Left ventricle myocardium inferior (tissue), 1 donor: ENCODE measurements at regions of chr11 and their contacts with region 1.

Region 1: GRCh38 chr11:123110356-123110755 is 48.4 kb upstream of the HSPA8 start:
- DNase-seq: no peak
- H3K4me3 ChIP-seq: no peak overlapping the region
- H3K27ac ChIP-seq: no peak overlapping the region
- H3K4me1 ChIP-seq: peaks cover 9% of the 10 kb centered on the region
- H3K27me3 ChIP-seq: peaks cover 8% of the 10 kb centered on the region
- CTCF ChIP-seq: no peak

Region 2: DNA sequence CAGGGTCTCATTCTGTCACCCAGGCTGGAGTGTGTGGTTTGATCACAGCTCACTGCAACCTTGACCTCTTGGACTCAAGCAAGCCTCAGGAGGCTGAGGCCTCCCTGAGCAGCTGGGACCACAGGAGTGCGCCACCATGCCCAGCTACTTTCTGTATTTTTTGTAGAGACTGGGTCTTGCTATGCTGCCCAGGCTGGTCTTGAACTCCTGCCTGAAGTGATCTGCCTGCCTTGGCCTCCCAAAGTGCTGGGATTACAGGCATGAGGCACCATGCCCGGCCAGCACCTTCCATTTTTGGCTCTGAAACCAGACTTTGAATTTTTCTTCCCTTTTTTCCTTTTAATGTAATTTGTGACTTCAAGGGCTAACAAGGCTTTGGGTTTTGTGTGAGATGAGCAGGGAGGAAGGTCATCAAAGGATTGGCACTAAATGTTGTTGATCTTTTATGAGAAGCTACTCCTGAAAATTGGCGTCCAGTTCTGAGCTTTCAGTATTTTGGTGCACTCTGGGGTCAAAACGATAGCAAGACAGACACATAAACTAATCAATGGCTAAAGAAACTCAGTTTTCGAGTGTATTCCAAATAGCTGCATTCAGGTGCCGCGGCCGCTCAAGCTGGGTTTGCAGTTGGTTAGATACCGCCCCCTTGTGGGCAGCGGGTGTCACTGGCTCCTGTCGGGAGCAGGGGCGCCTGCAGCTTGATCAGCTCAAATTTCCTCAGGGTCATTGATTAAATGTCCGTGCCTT is 136.6 kb after region 1 on chr11:
- intact Hi-C with region 1: loop called (anchors 2 kb)
- DNase-seq: peak; percentile 77
- H3K4me3 ChIP-seq: no peak overlapping the region
- H3K27ac ChIP-seq: no peak overlapping the region
- H3K4me1 ChIP-seq: peaks cover 5% of the 10 kb centered on the region
- H3K27me3 ChIP-seq: peaks cover 13% of the 10 kb centered on the region
- CTCF ChIP-seq: peak; percentile 99